Activated CD8-positive, alpha-beta T cell treated with anti-CD3 and anti-CD28 coated beads for 36 hours (primary cell): ENCODE measurements at regions of chr1 and their contacts with region 1.

Region 1: GRCh38 chr1:226407497-226408284 is at the start of gene PARP1:
- DNase-seq: peak; percentile 94
- ATAC-seq: peak; percentile 95
- H3K4me3 Mint-ChIP-seq: peak within 1 kb of the TSS; percentile 99
- H3K27ac Mint-ChIP-seq: peak within 1 kb of the TSS; percentile 98
- H3K4me1 Mint-ChIP-seq: peaks cover 34% of the 10 kb centered on the region
- H3K27me3 Mint-ChIP-seq: no peaks in the 10 kb centered on the region
- CTCF ChIP-seq: peak; percentile 76
- total RNA-seq, gene PARP1: 203 to 206 TPM

Region 2: GRCh38 chr1:226308723-226309315 is 98.9 kb before region 1 on chr1 and contains the start of gene LIN9:
- CTCF ChIA-PET with region 1: interaction called, 10 read pairs
- POLR2A ChIA-PET with region 1: interaction called, 16 read pairs
- intact Hi-C with region 1: no loop called
- DNase-seq: peak; percentile 96
- ATAC-seq: peak; percentile 91
- H3K4me3 Mint-ChIP-seq: peak within 1 kb of the TSS; percentile 88
- H3K27ac Mint-ChIP-seq: peak within 1 kb of the TSS; percentile 90
- H3K4me1 Mint-ChIP-seq: peaks cover 22% of the 10 kb centered on the region
- H3K27me3 Mint-ChIP-seq: peaks cover 14% of the 10 kb centered on the region
- CTCF ChIP-seq: no peak
- total RNA-seq, gene LIN9: 10.2 to 11.3 TPM

Region 3: GRCh38 chr1:226424228-226425003 is 16.7 kb after region 1 on chr1:
- CTCF ChIA-PET with region 1: interaction called, 95 read pairs
- POLR2A ChIA-PET with region 1: interaction called, 4 read pairs
- intact Hi-C with region 1: no loop called
- DNase-seq: peak; percentile 29
- ATAC-seq: peak; percentile 54
- H3K4me3 Mint-ChIP-seq: no peak overlapping the region
- H3K27ac Mint-ChIP-seq: no peak overlapping the region
- H3K4me1 Mint-ChIP-seq: peaks cover 27% of the 10 kb centered on the region
- H3K27me3 Mint-ChIP-seq: no peaks in the 10 kb centered on the region
- CTCF ChIP-seq: peak; percentile 74

Region 4: DNA sequence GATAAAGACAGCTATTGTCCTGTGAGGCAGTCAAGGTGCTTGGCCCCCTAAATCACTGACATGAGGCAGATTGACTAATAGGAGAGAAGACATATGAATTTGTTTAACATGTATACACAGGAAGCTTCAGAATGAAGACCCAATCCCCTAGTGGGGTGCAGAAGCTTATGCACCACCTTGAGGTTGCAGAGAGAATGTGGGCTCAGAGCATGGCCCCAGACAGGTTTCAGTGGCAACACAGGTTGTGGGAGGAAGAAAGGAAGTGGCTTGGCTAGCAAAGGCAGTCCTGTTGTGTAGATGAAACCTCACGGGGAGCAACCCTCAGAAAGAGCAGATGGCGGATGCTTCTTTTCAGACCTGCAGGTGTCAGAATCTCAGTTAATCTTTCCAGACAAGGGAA is 37.2 kb after region 1 on chr1:
- CTCF ChIA-PET with region 1: interaction called, 16 read pairs
- POLR2A ChIA-PET with region 1: interaction called, 6 read pairs
- intact Hi-C with region 1: no loop called
- DNase-seq: peak; percentile 86
- ATAC-seq: peak; percentile 99
- H3K4me3 Mint-ChIP-seq: no peak overlapping the region
- H3K27ac Mint-ChIP-seq: peak overlapping the region; percentile 12
- H3K4me1 Mint-ChIP-seq: peaks cover 31% of the 10 kb centered on the region
- H3K27me3 Mint-ChIP-seq: no peaks in the 10 kb centered on the region
- CTCF ChIP-seq: peak; percentile 61

Region 5: DNA sequence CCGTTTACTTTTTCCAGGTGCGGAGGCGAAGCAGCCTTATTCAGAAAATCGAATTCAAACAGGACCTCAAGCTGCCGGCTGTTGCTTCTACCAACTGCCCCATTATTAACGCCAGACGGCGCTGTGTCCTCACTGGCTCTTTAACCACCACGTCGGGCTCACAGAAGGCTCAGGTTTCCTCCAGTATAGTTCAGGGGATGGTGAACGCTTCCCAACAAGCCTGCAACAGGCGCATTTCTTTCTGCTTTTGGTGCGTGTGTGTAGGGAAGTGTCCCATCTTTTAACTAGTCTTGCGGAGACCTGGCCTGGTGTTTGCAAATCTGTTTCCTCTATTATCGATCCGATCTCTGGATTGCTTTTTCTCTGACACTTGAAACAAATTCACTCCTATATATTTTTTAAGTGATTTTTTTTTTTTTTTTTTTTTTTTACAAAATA is 140.1 kb after region 1 on chr1:
- CTCF ChIA-PET with region 1: interaction called, 23 read pairs
- POLR2A ChIA-PET with region 1: interaction called, 3 read pairs
- intact Hi-C with region 1: no loop called
- DNase-seq: peak; percentile 83
- ATAC-seq: peak; percentile 66
- H3K4me3 Mint-ChIP-seq: no peak overlapping the region
- H3K27ac Mint-ChIP-seq: no peak overlapping the region
- H3K4me1 Mint-ChIP-seq: peaks cover 13% of the 10 kb centered on the region
- H3K27me3 Mint-ChIP-seq: peaks cover 43% of the 10 kb centered on the region
- CTCF ChIP-seq: peak; percentile 71

Region 6: GRCh38 chr1:226584164-226584563 is 176.5 kb after region 1 on chr1:
- CTCF ChIA-PET with region 1: no interaction called
- POLR2A ChIA-PET with region 1: no interaction called
- intact Hi-C with region 1: no loop called
- DNase-seq: no peak
- ATAC-seq: no peak
- H3K4me3 Mint-ChIP-seq: no peak overlapping the region
- H3K27ac Mint-ChIP-seq: no peak overlapping the region
- H3K4me1 Mint-ChIP-seq: no peaks in the 10 kb centered on the region
- H3K27me3 Mint-ChIP-seq: no peaks in the 10 kb centered on the region
- CTCF ChIP-seq: no peak